Motor neuron (in vitro differentiated cells): ENCODE measurements at regions of chr15 and their contacts with region 1.

Region 1: GRCh38 chr15:92077353-92078085 is 224.0 kb downstream of the SLCO3A1 start:
- ATAC-seq: peak; percentile 69 to 86 (median 84)
- H3K4me3 ChIP-seq: no peak overlapping the region
- H3K27ac ChIP-seq: no peak overlapping the region
- H3K4me1 ChIP-seq: peaks cover 4 to 12% of the 10 kb centered on the region in 2 donors

Region 2: GRCh38 chr15:91291673-91292072 is 785.8 kb before region 1 on chr15:
- in situ Hi-C with region 1: loop called in 3 of 9 experiments (anchors 10 to 25 kb)
- ATAC-seq: peak in 1 of 8 experiments; percentile 37
- H3K4me3 ChIP-seq: no peak overlapping the region
- H3K27ac ChIP-seq: no peak overlapping the region
- H3K4me1 ChIP-seq: peaks cover 10 to 19% of the 10 kb centered on the region in 2 donors

Region 3: DNA sequence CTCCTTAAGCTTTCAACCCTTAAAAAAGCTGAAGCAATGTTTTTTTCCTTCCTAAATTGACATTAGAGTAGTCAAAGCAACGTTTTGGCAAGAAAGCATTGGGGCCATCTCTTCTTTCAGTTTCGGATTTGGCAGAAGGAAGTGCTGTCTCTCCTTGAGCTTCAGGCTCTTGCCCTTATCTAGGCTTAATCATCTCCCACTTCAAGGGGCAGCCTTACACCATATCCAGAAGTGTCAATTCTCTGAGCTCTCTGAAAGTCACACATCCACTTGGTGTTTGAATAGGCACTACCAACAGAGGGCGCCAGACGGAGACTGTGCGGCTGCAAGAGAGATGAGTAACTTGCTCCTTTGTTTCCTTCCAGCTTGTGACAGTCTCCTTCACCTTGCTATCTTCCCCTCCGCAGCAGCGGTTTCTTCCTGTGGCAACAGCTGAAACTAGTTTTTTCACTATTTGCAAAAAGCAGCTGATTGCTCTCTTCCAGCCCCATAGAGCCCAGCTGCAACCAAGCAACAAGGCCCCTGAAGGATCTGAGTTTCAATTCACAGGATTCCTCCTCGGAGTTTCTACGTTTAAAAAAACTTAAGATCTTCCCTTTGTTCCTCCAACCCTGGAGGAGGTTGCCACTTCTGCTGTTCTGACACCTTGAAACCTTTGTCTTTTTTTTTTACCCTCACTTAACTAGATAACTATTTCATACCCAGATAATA is 371.0 kb before region 1 on chr15:
- in situ Hi-C with region 1: loop called in 2 of 9 experiments (anchors 10 to 25 kb)
- ATAC-seq: peak; percentile 45 to 89 (median 72)
- H3K4me3 ChIP-seq: no peak overlapping the region
- H3K27ac ChIP-seq: no peak overlapping the region
- H3K4me1 ChIP-seq: peaks cover under 1 to 19% of the 10 kb centered on the region in 2 donors

Region 4: DNA sequence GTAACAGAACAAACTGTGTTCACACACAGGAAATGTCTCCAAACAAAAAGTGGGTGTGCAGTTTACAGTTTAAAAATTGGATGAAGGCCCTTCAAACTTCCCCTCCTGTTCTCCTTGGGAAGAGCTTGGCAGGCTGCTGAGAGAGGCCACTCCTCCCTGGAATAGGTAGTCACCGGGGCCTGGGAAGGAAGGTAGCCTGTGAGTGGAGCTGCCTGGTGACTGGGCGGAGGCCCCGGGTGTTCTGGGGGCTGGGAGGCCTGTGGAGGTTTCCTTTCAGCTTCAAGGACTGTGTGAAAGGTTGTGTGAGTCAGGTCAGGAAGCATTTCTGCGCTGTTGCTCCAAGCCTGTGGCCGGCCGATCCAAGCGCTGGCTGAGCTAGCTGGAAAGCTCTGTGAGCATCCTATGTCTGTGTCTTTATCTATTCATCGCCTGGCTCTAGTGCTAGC is 209.9 kb before region 1 on chr15:
- in situ Hi-C with region 1: loop called in 4 of 9 experiments (anchors 10 to 25 kb)
- ATAC-seq: peak in 7 of 8 experiments; percentile 21 to 80 (median 45)
- H3K4me3 ChIP-seq: no peak overlapping the region
- H3K27ac ChIP-seq: no peak overlapping the region
- H3K4me1 ChIP-seq: peaks cover 2 to 16% of the 10 kb centered on the region in 2 donors

Region 5: DNA sequence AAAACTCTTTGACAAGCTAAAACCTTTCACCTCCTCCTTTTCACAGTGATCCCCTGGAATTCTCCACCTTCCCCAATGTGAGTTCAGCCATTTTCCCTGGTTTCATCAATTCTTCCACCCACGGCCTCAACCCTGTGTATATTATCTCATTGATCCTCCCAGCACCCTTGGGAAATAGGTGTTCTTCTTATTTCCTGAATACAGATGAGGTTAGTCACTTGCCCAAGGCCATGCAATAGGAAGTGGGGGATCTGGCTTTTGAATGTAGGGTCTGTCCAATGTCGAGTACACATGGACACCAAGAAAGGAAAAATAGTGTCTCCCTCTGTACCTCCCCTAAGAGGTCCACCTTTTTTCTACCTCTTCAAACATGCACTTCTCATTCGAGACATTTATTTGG is 53.4 kb after region 1 on chr15:
- in situ Hi-C with region 1: no loop called
- ATAC-seq: no peak
- H3K4me3 ChIP-seq: no peak overlapping the region
- H3K27ac ChIP-seq: no peak overlapping the region
- H3K4me1 ChIP-seq: peaks cover 13 to 15% of the 10 kb centered on the region in 2 donors

Region 6: DNA sequence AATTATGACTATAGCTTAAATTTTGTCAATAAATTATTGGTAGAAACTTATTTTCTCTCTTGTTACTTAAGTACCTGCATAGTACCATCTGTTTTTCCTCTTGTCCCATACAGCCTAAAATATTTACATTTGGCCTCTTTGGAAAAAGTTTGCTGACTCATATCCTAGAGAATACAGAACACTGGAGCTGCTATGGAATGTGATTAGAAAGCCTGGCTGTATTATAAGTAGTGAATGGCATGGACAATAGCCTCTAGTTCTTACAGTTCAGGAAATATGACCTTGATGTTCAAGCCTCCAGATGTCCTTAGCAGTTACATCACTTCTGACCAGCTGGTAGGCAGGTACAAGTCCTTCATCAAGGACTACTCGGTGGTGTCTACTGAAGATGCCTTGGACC is 344.5 kb after region 1 on chr15:
- in situ Hi-C with region 1: loop called in 1 of 9 experiments (anchors 25 kb)
- ATAC-seq: peak in 4 of 8 experiments; percentile 12 to 67 (median 48)
- H3K4me3 ChIP-seq: no peak overlapping the region
- H3K27ac ChIP-seq: no peak overlapping the region
- H3K4me1 ChIP-seq: no peaks in the 10 kb centered on the region